ENCODE measurements at regions of chr7 and their contacts with region 1.

Region 1: DNA sequence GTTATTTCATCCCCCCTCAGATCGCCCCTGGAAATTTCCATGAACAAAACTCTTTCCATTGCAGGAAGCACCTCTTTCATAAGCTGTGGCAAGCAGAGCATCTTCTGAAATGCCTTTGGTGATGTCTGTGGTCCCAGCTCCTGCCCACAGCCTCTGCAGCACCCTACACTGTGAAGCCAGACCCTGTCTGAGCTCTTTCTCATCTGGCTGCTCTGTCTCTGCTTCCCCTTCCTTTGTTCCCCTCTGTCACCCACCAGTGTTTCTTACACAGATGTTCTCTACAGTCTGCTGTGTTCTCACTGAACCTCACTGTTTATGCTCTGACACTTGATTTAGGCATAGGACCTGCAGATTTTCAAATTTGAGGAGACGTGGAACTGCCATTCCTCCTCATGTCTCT is 1.9 kb upstream of the TAS2R39 start:
- DNase-seq: no peak
- ATAC-seq: no peak
- H3K4me3 ChIP-seq: no peak overlapping the region
- H3K27ac ChIP-seq: no peak overlapping the region
- H3K4me1 ChIP-seq: no peaks in the 10 kb centered on the region
- H3K27me3 ChIP-seq: no peaks in the 10 kb centered on the region
- CTCF ChIP-seq: no peak

Region 2: GRCh38 chr7:143245123-143245522 is 63.8 kb after region 1 on chr7:
- CTCF ChIA-PET with region 1: no interaction called
- POLR2A ChIA-PET with region 1: no interaction called
- in situ Hi-C with region 1: no loop called
- intact Hi-C with region 1: no loop called
- DNase-seq: no peak
- ATAC-seq: no peak
- H3K4me3 ChIP-seq: no peak overlapping the region
- H3K27ac ChIP-seq: no peak overlapping the region
- H3K4me1 ChIP-seq: no peaks in the 10 kb centered on the region
- H3K27me3 ChIP-seq: peaks cover 6% of the 10 kb centered on the region; the same call in 1 of the 2 replicates
- CTCF ChIP-seq: no peak

Region 3: DNA sequence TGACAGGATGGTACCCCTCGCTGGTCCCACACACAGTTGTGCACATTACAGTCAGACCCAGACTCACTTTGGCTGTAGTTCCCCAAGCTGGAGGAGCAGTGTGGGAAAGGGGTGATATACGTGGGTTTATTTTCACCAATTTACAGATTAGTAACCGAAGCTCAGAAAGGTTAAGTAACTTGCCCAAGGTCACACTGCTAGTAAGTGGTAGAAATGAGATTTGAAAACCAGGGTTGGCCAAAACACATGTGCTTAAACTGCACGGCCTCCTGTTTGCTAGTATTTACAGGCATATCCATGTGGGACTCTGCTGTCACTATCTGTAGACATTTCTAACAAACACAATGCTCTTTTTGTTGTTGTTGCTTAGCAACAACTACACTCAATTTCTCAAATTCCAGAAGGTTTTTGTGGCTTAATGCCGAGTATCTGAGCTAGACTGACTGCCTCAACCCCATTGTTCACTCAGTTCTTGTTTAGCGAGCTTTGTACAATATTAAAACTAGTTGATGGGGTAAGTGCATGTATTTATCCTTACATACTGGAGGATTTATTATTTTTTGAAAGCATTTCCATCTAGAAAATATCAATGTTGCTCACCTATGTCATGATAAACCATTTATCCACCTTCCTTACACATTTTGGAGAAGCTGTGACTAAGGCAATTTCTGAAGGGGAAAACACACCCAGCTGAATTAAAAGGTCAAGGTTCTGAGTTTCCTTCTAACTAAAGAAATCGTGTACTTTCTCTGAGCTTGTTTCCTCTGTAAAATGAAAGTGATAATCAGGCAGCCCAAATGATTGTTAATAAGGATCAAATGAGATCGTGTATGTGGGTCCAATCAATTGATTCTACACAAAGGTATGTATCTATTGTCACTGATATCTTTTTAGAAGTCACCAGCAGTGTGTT is 98.1 kb after region 1 on chr7:
- CTCF ChIA-PET with region 1: no interaction called
- POLR2A ChIA-PET with region 1: no interaction called
- in situ Hi-C with region 1: no loop called
- intact Hi-C with region 1: no loop called
- DNase-seq: no peak
- ATAC-seq: peak; percentile 59; the same call in 1 of the 2 replicates
- H3K4me3 ChIP-seq: no peak overlapping the region
- H3K27ac ChIP-seq: no peak overlapping the region
- H3K4me1 ChIP-seq: peaks cover 7% of the 10 kb centered on the region; the same call in 1 of the 2 replicates
- H3K27me3 ChIP-seq: no peaks in the 10 kb centered on the region
- CTCF ChIP-seq: no peak

Region 4: DNA sequence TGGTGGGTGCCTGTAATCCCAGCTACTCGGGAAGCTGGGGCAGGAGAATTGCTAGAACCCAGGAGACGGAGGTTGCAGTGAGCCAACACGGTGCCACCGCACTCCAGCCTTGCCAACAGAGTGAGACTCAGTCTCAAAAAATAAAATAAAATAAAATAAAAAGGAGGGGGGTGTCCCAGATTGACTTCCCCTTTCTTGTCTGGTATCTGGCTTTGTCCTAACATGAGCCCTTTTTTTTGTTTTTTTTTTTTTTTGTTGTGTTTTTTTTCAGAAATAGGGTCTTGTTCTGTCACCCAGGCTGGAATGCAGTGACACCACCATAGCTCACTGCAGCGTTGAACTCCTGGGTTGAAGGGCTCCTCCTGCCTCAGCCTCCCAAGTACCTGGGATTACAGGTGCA is 111.5 kb after region 1 on chr7:
- CTCF ChIA-PET with region 1: no interaction called
- POLR2A ChIA-PET with region 1: no interaction called
- in situ Hi-C with region 1: no loop called
- intact Hi-C with region 1: no loop called
- DNase-seq: no peak
- ATAC-seq: no peak
- H3K4me3 ChIP-seq: no peak overlapping the region
- H3K27ac ChIP-seq: no peak overlapping the region
- H3K4me1 ChIP-seq: peaks cover 7% of the 10 kb centered on the region
- H3K27me3 ChIP-seq: no peaks in the 10 kb centered on the region
- CTCF ChIP-seq: no peak

Region 5: GRCh38 chr7:143901668-143902331 is 720.5 kb after region 1 on chr7 and contains the start of gene TCAF1:
- CTCF ChIA-PET with region 1: no interaction called
- POLR2A ChIA-PET with region 1: interaction called, 14 read pairs
- in situ Hi-C with region 1: no loop called
- intact Hi-C with region 1: no loop called
- DNase-seq: peak; percentile 84
- ATAC-seq: peak; percentile 98
- H3K4me3 ChIP-seq: peak within 1 kb of the TSS; percentile 95 to 96
- H3K27ac ChIP-seq: peak within 1 kb of the TSS; percentile 95
- H3K4me1 ChIP-seq: peaks cover 23% of the 10 kb centered on the region
- H3K27me3 ChIP-seq: no peaks in the 10 kb centered on the region
- CTCF ChIP-seq: peak; percentile 59
- total RNA-seq, gene TCAF1: 35.2 TPM